ENCODE measurements at regions of chr21 and their contacts with region 1.

Region 1: DNA sequence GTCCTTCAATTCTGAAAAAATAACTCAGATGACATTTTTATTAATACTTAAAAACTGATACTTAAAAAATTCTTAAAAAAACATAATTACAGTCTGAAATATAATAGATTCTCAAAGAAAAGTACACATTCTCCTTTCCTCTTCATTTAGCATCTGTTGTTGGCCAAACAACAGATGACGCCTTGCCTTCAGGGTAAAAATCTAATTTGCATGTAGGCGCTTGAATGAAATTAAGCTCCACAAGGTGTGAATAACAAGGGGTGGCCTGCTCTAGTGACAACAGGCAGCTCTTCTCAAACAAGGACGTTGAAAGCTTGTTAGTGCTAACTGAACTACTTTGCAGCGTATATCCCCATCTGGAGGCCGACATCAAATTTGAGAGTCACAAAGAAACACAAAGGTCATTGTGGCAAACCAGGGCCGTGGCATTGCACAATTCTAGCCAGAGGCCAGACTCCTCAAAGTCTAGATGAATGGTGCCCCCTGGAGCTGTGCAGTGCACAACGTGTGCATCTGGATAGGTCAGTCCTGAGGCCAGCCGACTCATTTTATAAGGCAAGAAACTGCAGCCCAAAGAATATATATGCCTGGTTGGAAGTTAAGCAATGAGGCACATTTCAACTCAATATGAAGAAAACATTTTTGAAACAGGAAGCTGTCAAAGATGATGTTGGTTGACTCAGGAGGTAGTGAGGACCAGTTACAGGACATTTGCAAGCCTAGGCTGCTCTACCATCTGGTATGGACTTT is 459.2 kb upstream of the RUNX1 start:
- H3K4me3 Mint-ChIP-seq: no peak overlapping the region
- H3K27ac Mint-ChIP-seq: peak overlapping the region; percentile 78
- H3K4me1 Mint-ChIP-seq: peaks cover 65% of the 10 kb centered on the region
- H3K27me3 Mint-ChIP-seq: no peaks in the 10 kb centered on the region

Region 2: GRCh38 chr21:34745557-34746255 is 762.6 kb before region 1 on chr21:
- intact Hi-C with region 1: loop called (anchors 5 kb)
- H3K4me3 Mint-ChIP-seq: peak overlapping the region; percentile 57
- H3K27ac Mint-ChIP-seq: no peak overlapping the region
- H3K4me1 Mint-ChIP-seq: no peaks in the 10 kb centered on the region
- H3K27me3 Mint-ChIP-seq: peaks cover 26% of the 10 kb centered on the region

Region 3: DNA sequence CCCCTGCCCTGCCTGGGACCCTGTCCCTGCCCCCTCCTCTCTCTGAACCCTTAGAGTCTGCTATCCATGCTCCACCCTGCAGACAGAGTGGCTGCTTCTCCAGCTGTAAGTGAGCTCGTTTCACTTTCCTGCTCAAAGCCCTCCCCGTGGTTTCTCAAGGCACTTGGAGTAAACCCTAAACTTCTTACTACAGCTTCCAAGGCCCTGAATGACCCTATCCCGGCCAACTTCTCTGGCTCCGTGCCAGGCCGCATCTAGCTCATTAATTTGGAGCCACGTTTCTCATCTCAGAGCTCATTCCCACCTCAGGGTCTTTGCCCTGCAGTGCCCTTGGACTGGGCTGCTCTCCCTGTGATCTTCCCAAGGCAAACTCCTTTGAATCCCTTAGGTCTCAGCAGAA is 224.1 kb before region 1 on chr21:
- intact Hi-C with region 1: loop called (anchors 10 kb)
- H3K4me3 Mint-ChIP-seq: no peak overlapping the region
- H3K27ac Mint-ChIP-seq: peak overlapping the region; percentile 92
- H3K4me1 Mint-ChIP-seq: peaks cover 46% of the 10 kb centered on the region
- H3K27me3 Mint-ChIP-seq: no peaks in the 10 kb centered on the region

Region 4: GRCh38 chr21:35840197-35840799 is 332.0 kb after region 1 on chr21:
- intact Hi-C with region 1: loop called (anchors 10 kb)
- H3K4me3 Mint-ChIP-seq: no peak overlapping the region
- H3K27ac Mint-ChIP-seq: no peak overlapping the region
- H3K4me1 Mint-ChIP-seq: no peaks in the 10 kb centered on the region
- H3K27me3 Mint-ChIP-seq: peaks cover 9% of the 10 kb centered on the region

Region 5: GRCh38 chr21:35932232-35932911 is 424.1 kb after region 1 on chr21:
- intact Hi-C with region 1: loop called (anchors 2 kb)
- H3K4me3 Mint-ChIP-seq: no peak overlapping the region
- H3K27ac Mint-ChIP-seq: no peak overlapping the region
- H3K4me1 Mint-ChIP-seq: peaks cover 11% of the 10 kb centered on the region
- H3K27me3 Mint-ChIP-seq: no peaks in the 10 kb centered on the region

Region 6: DNA sequence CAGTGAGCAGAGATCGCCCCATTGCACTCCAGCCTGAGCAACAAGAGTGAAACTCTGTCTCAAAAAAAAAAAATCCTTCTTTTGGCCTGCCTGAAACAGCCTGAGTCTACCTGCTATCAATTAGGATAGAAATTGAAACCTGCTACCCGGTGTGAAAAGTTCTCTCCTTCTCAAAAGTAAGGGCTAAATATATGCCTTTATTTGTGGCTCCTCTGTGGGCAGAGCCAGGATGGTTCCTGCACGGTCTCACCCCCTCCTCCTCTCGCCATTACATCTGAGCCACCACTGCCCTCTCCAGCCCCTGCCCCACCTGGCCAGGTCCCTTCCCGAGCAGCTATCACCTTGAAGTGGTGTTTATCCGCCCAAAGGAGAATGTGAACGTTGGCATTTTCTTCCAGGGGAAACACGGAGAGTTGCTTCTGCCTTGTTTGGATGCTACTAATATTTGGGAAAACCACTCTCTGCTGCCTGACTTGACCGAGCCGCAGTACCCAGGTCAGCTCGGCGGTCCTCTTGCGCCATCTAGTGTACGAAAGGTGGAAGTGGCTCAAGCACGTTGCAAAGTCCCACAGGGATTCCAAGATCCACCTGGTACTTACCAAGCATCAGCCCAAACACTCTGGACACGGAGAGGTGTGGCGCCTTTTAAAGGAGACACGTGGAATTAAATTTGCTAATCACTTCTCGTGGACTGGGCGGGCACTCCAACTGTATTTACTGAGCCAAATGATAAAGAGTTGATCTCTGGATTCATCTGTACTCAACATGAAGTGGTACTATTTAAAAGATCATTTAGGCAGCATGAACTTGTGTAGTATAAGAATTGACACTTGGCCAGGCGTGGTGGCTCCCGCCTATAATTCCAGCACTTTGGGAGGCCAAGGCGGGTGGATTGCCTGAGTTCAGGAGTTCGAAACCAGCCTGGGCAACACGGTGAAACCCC is 520.1 kb after region 1 on chr21:
- intact Hi-C with region 1: loop called (anchors 5 kb)
- H3K4me3 Mint-ChIP-seq: no peak overlapping the region
- H3K27ac Mint-ChIP-seq: no peak overlapping the region
- H3K4me1 Mint-ChIP-seq: peaks cover 5% of the 10 kb centered on the region
- H3K27me3 Mint-ChIP-seq: peaks cover 4% of the 10 kb centered on the region

Measured in dendritic cell treated with granulocyte-macrophage colony-stimulating factor and Interleukin-4, amounts not matched to agents 40 ng/mL and 50 ng/mL, for 4 days (primary cell).